MCF 10A (cell line): ENCODE measurements at regions of chr16 and their contacts with region 1.

Region 1: GRCh38 chr16:53054670-53055485 is at the start of gene CHD9:
- DNase-seq: peak; percentile 84
- H3K4me3 Mint-ChIP-seq: peak within 1 kb of the TSS; percentile 86
- H3K27ac Mint-ChIP-seq: peak within 1 kb of the TSS; percentile 83
- H3K4me1 Mint-ChIP-seq: peaks cover 46% of the 10 kb centered on the region
- H3K27me3 Mint-ChIP-seq: no peaks in the 10 kb centered on the region
- CTCF ChIP-seq: peak; percentile 98
- total RNA-seq, gene CHD9: 62.8 and 62.9 TPM in 2 replicates

Region 2: DNA sequence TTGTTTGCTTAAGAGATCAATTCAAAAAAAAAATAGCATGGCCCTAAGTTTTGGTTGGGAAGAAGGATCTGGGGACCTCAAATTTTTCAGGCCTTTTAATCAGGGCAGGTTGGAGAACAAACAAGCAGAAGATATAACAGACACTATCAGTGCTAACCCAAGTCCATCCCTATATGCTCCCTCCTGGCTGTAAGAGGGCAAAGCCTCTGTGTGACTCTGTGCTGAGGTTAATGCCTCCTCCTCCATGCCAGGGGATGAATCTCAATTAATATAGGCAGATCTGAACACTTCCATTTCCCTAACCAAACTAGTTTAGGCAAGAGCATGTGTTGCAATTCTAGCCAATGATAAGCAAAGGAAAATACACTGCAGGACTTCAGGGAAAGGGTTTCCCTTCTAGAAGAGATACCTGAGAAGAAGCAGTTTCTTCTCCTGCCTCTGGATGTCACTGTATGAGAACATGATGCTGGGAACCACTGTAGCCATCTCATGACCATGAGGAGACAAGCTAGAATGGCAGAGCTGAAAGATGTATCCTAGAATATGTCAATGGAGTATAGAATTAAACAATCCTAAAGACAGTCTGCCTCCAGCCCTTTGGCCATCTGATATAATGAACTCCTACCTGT is 78.2 kb before region 1 on chr16:
- CTCF ChIA-PET with region 1: interaction called, 3 read pairs
- POLR2A ChIA-PET with region 1: interaction called, 3 read pairs
- intact Hi-C with region 1: loop called (anchors 2 kb)
- DNase-seq: peak; percentile 60
- H3K4me3 Mint-ChIP-seq: no peak overlapping the region
- H3K27ac Mint-ChIP-seq: no peak overlapping the region
- H3K4me1 Mint-ChIP-seq: no peaks in the 10 kb centered on the region
- H3K27me3 Mint-ChIP-seq: peaks cover 14% of the 10 kb centered on the region
- CTCF ChIP-seq: peak; percentile 19

Region 3: DNA sequence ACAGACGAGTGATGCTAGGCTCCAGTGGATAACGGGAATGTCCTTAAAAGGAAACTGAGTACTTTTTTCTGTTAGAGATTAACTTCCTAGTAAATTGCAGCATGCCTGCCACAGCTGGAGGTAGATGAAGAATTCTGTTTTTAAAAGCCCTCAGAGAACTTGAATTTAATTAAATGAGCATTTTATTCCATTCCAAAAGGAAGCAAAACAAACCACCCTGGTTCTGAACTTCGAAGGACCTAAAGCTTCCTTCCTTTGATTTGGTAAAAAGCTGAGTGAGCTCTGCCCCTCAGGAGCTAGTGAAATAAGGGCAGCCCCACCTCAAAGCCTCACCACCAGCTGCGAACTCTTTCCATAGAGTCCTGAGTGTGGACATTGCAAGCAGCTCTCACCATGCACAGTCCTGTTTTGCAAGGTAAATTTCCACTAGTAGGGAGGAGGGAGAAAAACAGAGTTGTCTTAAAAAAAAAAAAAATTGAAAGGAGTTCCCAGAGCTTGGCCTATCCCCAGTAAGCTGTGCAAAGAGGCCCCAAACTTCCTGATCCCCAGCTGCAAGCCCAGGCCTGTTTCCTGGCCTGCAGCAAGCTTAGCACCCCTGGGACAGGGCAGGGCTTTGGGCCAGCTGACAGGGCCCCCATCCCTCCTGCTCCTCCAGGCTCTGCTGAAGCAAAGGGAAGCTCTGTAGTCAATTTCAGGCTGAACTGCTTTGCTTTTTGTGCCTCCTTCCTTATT is 13.4 kb before region 1 on chr16:
- CTCF ChIA-PET with region 1: interaction called, 7 read pairs
- POLR2A ChIA-PET with region 1: interaction called, 17 read pairs
- intact Hi-C with region 1: no loop called
- DNase-seq: peak; percentile 80
- H3K4me3 Mint-ChIP-seq: peak overlapping the region; percentile 18
- H3K27ac Mint-ChIP-seq: peak overlapping the region; percentile 16
- H3K4me1 Mint-ChIP-seq: peaks cover 53% of the 10 kb centered on the region
- H3K27me3 Mint-ChIP-seq: no peaks in the 10 kb centered on the region
- CTCF ChIP-seq: no peak

Region 4: DNA sequence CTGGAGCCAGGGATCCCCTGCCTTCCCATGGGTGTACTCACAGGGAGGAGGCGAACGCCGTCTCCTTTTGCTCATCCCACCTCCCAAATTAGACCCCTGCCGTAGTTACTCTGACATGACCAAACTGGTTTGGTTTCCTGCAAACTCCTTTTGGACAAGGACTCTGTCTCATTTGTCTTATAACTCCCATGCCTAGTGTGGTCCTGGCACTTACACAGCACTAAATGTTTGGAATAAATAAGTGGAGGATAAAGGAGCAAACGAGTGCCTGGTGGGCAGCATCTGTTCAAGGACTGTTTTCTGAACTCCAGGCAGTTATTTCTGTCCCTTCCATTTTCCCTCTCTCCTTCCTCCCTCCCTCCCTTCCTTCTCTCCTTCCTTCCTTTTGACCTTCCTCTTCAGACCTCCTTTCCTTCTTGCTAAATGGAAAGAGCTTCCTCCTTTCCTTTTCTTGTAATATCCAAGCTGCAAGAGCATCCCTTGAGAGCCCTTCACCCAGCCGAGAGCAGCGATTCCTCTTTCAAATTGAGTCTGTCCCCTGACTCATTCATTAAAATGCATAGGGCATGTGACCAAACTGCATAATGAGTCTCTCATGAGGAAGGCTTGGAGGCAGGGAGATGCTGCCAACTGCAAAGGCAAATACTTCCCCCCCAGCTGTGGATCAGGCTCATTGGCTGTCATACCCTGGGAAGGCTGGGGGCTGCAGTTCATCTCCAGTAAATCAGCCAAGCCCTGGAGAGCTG is 36.8 kb after region 1 on chr16:
- CTCF ChIA-PET with region 1: interaction called, 34 read pairs
- POLR2A ChIA-PET with region 1: interaction called, 57 read pairs
- intact Hi-C with region 1: loop called (anchors 1 kb)
- DNase-seq: peak; percentile 68
- H3K4me3 Mint-ChIP-seq: peak overlapping the region; percentile 67
- H3K27ac Mint-ChIP-seq: peak overlapping the region; percentile 50
- H3K4me1 Mint-ChIP-seq: peaks cover 47% of the 10 kb centered on the region
- H3K27me3 Mint-ChIP-seq: no peaks in the 10 kb centered on the region
- CTCF ChIP-seq: no peak

Region 5: DNA sequence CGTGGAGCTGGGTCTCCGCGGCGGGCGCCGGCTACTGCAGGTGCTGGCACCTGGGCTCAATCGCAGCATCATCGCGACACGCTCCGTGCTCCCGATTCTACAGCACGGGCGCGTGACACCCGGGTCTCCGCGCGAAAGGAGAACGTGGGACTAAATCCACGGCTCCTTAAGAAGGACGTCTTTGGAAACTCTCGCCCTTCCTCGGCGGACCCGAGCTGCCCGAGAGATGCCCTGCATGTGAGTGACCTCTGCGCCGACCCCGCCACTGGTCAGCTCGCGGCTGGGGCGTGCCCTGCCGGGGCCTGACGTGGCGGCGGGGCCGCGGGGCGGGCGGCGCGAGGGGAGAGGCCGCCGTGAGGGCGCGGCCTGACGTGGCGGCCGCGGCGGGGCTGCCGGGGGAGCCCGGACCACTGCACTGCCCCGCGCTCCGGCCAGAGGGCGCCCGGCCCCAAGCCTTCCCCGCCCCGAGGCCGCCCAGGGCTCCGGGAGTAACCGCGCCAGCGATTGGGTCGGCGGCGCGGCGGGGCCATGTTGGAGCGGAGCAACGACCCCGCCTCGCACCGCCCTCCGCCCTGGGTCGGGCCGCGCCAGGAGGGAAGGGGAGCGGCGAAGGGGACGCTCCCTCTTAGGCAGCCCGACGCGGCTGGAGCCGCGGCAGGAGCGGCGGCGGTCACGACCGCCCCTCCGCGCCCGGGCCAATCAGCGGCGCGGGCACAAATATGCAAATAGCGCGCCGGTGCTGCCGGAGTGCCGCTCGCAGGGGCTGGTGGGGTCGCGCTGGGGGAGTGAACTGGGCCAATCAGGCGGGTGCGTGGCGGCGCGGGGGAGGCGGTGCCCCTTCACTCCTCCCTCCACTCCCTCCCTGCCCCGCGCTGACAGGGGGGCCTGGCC is 75.5 kb after region 1 on chr16:
- CTCF ChIA-PET with region 1: interaction called, 23 read pairs
- POLR2A ChIA-PET with region 1: interaction called, 32 read pairs
- intact Hi-C with region 1: loop called (anchors 1 kb)
- DNase-seq: peak; percentile 93
- H3K4me3 Mint-ChIP-seq: peak overlapping the region; percentile 94
- H3K27ac Mint-ChIP-seq: peak overlapping the region; percentile 89
- H3K4me1 Mint-ChIP-seq: peaks cover 23% of the 10 kb centered on the region
- H3K27me3 Mint-ChIP-seq: no peaks in the 10 kb centered on the region
- CTCF ChIP-seq: peak; percentile 61

Region 6: DNA sequence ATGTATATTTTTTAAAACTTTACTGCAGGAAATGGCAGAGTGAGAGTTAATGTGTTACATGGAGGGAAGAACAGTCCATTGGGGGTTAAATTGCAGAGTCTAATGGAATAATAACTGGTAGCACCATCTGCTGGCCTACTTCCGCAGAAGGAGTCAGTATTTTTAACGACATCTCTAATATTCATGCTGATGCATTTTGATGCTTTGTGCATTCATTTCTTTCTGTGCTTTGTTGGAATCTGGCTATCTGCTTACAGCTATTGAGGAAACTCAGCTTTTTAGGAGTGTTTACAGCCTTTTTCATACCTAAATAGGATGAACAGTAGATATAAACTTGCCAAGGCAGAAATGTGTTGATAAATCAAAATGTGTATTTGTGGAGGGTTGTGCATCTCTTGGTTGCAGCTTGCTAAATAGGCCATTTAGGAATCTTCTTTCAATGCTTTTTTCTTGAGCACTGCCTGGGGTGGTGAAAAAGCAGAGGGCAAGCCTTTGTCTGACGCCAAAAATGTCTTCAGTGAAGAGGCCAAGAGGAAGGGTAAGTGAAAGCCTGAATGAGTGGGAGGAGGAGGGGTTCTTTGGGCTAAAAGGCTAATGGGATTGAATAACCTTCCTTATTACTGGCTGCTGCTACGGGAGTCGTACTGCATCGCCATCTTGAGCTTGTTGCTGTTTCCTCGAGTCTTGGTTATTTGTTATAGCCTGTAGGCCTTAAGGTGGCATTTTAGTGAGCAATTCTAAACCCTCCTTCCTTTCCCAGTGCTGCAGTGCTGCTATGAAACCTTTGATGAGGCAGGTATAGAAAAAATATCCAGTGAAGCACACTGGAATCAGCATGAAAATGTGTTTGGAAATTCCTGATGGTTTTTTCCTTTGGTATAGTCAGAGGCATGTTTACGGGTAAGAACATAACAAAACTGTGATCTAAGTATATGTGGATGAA is 153.2 kb after region 1 on chr16:
- CTCF ChIA-PET with region 1: interaction called, 48 read pairs
- POLR2A ChIA-PET with region 1: interaction called, 68 read pairs
- intact Hi-C with region 1: loop called (anchors 1 kb)
- DNase-seq: peak; percentile 90
- H3K4me3 Mint-ChIP-seq: peak overlapping the region; percentile 80
- H3K27ac Mint-ChIP-seq: peak overlapping the region; percentile 76
- H3K4me1 Mint-ChIP-seq: peaks cover 23% of the 10 kb centered on the region
- H3K27me3 Mint-ChIP-seq: no peaks in the 10 kb centered on the region
- CTCF ChIP-seq: peak; percentile 57

Region 7: DNA sequence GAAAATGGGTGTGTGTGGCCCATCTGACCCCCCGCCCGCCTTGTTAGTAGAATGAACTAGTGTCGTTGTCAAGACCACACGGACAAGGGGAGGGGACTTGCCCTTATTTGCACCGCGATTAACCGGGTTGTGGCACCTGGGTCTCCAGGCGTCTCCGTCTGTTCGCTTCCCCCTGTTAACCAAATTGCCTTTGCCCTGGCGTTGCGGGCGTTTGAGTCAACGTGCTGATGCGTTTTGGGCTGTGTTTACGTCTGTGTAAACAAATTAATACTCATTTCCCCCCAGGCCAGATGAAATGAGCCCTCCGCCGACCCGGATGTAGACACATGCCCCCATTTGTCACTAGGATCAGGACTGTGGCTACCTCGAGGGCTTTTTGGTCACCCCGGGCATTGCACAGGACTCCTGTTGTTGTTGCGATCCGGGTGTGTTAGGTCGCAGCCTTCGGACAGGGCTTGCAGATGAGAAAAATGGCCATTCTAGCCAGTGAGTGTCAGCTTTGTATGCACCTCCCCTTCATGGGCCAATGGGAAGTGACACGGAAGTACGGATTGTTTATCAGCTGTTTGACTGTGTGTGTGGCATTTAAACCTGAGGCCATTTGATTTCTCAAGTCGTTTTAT is 380.3 kb after region 1 on chr16:
- CTCF ChIA-PET with region 1: no interaction called
- POLR2A ChIA-PET with region 1: no interaction called
- intact Hi-C with region 1: loop called (anchors 10 kb)
- DNase-seq: peak; percentile 90
- H3K4me3 Mint-ChIP-seq: peak overlapping the region; percentile 97
- H3K27ac Mint-ChIP-seq: peak overlapping the region; percentile 95
- H3K4me1 Mint-ChIP-seq: no peaks in the 10 kb centered on the region
- H3K27me3 Mint-ChIP-seq: no peaks in the 10 kb centered on the region
- CTCF ChIP-seq: no peak